AG04450 (cell line): ENCODE measurements at regions of chr6 and their contacts with region 1.

Region 1: GRCh38 chr6:30091577-30092381 is 16.2 kb upstream of the RNF39 start:
- DNase-seq: peak; percentile 15
- H3K4me3 ChIP-seq: no peak overlapping the region
- H3K27ac ChIP-seq: no peak overlapping the region
- H3K27me3 ChIP-seq: peaks cover 23% of the 10 kb centered on the region
- CTCF ChIP-seq: no peak

Region 2: DNA sequence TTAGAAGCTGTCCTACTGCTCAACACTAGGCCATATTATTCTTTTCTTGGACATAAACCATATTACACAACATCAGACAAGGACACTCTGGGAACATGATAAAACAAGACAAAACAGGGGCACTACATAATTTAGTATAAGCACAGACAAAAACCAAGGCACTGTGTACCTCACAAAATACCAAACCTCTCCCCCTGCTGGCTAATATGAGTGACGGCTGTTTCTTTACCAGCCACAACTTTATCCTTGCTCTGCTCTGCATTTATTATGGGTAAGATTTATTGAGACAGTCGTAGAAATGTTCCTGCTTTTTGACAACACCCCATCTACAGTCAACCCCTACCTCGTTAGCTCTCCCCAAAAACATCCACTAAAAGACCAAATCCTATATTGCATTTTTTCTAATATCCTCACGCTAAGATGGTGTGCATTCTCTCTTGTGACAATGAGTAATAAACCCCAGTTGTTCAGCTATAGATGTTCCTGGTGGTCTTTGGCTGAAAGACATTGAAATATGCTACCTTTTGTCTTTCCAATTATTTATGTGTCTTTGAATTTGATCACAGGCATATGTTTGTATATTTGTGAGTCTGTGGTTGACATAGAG is 54.5 kb before region 1 on chr6:
- CTCF ChIA-PET with region 1: no interaction called
- POLR2A ChIA-PET with region 1: no interaction called
- DNase-seq: no peak
- H3K4me3 ChIP-seq: no peak overlapping the region
- H3K27ac ChIP-seq: no peak overlapping the region
- H3K27me3 ChIP-seq: no peaks in the 10 kb centered on the region
- CTCF ChIP-seq: peak; percentile 61

Region 3: DNA sequence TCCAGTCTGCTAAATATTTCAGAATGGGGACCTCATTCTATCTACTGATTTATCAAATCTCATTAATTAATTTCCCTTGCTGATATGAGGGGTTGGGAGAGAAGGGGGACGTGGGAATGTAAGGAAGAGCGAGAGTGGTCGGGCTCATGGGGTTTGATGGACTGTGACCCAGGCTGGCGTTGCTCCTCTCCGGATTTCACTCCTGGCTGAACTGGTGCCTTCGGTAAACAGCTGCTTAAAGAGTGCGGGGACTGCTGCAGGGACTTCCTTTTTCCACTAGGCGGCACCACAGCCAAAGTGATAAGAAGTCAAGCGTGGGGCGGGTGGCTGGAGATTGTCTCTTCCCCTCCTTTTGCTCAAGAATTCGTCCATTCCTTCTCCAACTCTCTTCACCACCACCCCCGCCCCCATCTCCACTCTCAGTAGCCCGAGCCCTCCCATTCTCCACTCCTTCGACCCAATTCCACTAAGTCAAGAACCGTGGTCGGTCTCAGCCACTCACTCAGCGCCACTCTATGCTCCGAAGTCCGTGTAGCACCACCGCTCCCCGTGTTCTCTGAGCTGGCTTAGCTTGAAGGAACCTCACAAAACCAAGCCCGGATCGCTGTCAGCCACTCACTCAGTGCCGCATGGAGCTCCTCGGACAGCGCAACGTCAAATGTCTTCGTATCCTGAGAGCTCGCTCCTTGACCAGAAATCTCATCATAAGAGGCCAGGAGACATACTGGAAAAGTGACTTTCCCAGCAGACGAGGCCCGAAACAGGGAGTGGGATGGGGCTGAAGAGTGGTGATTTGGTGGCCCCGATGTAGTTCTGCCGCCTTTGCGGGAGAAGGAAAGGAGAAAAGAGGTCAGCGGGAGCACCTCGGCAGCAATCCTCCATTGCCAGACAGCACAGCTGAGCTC is 11.4 kb after region 1 on chr6:
- CTCF ChIA-PET with region 1: interaction called, 19 read pairs
- POLR2A ChIA-PET with region 1: no interaction called
- DNase-seq: peak; percentile 64
- H3K4me3 ChIP-seq: peak overlapping the region; percentile 58
- H3K27ac ChIP-seq: no peak overlapping the region
- H3K27me3 ChIP-seq: peaks cover 50% of the 10 kb centered on the region
- CTCF ChIP-seq: peak; percentile 92

Region 4: GRCh38 chr6:30184417-30185031 is 92.7 kb after region 1 on chr6:
- CTCF ChIA-PET with region 1: interaction called, 10 read pairs
- POLR2A ChIA-PET with region 1: no interaction called
- DNase-seq: no peak
- H3K4me3 ChIP-seq: no peak overlapping the region
- H3K27ac ChIP-seq: no peak overlapping the region
- H3K27me3 ChIP-seq: peaks cover 3% of the 10 kb centered on the region
- CTCF ChIP-seq: no peak